ENCODE measurements at regions of chr17 and their contacts with region 1.

Region 1: DNA sequence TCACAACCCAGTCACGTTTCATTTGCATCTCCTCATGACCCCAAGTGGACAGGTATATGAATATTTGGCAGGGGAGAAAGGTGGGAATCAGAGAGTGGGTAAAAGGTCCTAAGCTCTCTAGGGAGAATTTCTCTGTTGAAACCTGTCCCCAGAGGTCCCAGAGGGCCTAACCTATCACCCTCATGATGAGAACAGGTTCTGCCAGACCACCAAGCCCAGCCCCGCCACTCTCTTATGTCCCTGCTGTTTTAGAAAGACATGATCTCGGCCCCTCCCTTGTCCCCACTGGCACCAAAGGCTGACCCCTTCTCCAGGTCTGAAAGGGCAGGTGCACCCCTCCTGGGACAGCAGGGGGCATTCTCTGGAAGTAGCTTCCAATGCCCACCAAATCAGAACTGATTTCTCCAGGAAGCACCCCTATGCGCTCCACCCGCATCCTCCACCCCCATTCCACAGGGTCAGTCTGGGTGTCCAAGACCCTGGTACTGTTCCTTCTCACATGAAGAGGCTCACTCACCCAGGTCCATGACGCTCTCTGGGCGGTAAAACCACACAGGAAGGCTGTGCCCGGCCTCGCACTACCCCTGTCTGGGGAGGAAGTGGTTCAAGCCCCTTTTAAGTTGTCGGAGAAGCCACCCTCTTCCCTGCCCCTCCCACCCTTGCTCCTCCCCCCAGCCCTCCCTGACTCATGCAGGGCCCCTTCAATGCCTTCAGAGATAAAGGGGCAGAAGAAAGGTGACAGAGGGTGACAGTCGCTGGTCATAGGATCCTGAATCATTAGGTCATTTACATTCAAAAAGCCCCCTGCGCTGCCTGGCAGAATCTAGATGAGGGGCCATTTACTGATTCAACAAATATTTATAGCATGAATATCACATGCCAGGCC is at the start of gene CCR7:
- DNase-seq: peak; percentile 78
- ATAC-seq: peak; percentile 66
- H3K4me3 Mint-ChIP-seq: peak within 1 kb of the TSS; percentile 89
- H3K27ac Mint-ChIP-seq: peak within 1 kb of the TSS; percentile 99
- H3K4me1 Mint-ChIP-seq: peaks cover 74% of the 10 kb centered on the region
- H3K27me3 Mint-ChIP-seq: no peaks in the 10 kb centered on the region
- CTCF ChIP-seq: no peak
- total RNA-seq, gene CCR7: 572 and 573 TPM in 2 replicates

Region 2: DNA sequence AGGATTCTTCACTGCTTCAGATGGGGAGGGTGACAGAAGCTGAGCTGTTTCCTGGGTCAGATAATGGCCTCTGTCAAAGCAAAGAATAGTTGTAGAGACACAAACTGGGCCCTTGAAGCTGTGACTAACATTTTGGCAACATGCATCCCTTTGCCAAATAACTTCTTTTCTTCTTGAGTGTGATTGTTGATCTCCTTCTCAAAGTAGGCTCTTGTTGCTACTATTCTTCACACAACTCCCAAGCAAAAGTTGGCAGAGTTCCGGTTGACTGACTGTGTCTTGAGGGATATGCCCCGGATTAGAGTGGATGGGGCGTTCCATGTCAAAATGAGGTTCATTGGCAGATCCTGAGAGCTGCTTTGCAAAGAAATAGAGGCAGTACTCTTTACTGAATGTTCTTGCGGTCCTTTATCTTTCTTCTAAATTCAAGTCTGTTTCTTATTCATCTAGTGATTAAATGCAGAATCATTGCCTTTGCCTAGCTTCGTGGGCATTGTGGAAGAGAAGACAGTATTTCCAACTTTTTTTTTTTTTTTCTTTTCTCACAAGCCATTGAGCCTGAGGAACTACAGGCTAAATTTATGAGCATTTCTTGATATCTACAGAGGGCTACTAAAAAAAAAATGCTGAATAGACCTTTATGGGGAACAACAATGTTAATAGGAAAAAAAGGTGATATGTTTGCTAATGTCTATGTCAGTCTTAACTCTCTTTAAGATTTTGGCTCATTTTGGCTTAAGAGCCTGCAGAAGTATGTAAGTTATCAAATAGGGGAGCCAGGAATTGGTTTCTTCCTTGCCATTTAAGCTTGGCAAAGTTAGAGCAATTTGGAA is 340.2 kb before region 1 on chr17:
- CTCF ChIA-PET with region 1: no interaction called
- POLR2A ChIA-PET with region 1: no interaction called
- intact Hi-C with region 1: no loop called
- DNase-seq: no peak
- ATAC-seq: no peak
- H3K4me3 Mint-ChIP-seq: no peak overlapping the region
- H3K27ac Mint-ChIP-seq: peak overlapping the region; percentile 62
- H3K4me1 Mint-ChIP-seq: peaks cover 30% of the 10 kb centered on the region
- H3K27me3 Mint-ChIP-seq: no peaks in the 10 kb centered on the region
- CTCF ChIP-seq: no peak

Region 3: DNA sequence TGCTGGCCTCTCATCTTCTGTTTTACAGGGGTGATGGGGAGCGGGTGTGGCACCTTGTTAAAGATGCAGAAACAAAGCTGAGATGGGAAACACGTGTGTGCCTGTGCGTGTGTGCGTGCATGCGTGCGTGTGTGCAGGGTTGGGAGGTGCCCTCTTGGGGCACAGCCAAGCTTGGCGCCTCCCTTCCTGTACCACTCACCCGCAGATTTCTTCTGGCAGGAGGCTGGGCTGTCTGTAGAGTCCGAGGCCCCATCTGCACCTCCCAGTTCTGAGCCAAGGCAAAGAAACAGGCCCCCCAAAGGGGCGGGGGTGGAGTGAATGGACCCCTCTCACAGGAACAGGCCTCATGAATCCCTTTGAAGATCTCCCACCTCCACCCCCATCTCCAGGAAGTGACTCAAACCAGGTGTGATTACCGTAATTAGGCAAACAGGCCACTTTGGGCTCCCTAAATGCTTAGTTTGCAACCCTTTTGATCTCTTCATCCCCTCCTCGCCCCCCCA is 84.6 kb before region 1 on chr17:
- CTCF ChIA-PET with region 1: interaction called, 6 read pairs
- POLR2A ChIA-PET with region 1: interaction called, 13 read pairs
- intact Hi-C with region 1: no loop called
- DNase-seq: peak; percentile 32
- ATAC-seq: peak; percentile 88
- H3K4me3 Mint-ChIP-seq: peak overlapping the region; percentile 41
- H3K27ac Mint-ChIP-seq: peak overlapping the region; percentile 72
- H3K4me1 Mint-ChIP-seq: peaks cover 57% of the 10 kb centered on the region
- H3K27me3 Mint-ChIP-seq: no peaks in the 10 kb centered on the region
- CTCF ChIP-seq: no peak

Region 4: DNA sequence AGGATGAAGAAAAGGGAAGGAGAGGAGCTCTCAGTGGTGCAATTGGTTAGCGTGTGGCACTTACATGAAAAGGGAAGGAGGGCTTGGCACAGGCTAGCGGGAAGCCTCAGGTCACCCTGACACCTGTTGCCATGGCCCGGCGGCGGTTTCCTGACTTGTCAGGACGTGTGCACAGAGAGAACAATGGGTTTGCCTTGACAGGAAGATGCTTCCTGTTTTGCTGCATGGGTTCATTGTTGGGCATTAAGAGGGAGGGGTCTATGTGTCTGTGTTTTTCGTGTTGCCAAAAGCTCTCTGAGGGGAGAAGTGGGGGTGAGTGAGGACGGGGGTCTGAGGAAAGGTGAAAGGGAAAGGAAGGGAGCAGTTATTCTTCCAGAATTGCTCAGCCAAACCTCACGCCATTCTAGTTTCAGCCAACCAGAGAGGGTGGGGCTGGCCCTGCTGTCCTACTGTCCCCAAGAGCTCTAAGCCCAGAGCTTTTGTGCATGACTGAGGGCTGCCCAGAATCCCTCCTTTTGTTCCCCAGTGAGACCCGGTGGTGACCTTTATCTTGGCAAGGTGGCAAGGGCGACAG is 17.3 kb after region 1 on chr17:
- CTCF ChIA-PET with region 1: interaction called, 25 read pairs
- POLR2A ChIA-PET with region 1: interaction called, 1,450 read pairs
- intact Hi-C with region 1: loop called (anchors 1 kb)
- DNase-seq: no peak
- ATAC-seq: peak; percentile 55
- H3K4me3 Mint-ChIP-seq: peak overlapping the region; percentile 54
- H3K27ac Mint-ChIP-seq: peak overlapping the region; percentile 87
- H3K4me1 Mint-ChIP-seq: peaks cover 93% of the 10 kb centered on the region
- H3K27me3 Mint-ChIP-seq: no peaks in the 10 kb centered on the region
- CTCF ChIP-seq: no peak

Region 5: GRCh38 chr17:40588552-40588951 is 23.4 kb after region 1 on chr17:
- CTCF ChIA-PET with region 1: interaction called, 6 read pairs
- POLR2A ChIA-PET with region 1: interaction called, 65 read pairs
- intact Hi-C with region 1: no loop called
- DNase-seq: no peak
- ATAC-seq: no peak
- H3K4me3 Mint-ChIP-seq: no peak overlapping the region
- H3K27ac Mint-ChIP-seq: no peak overlapping the region
- H3K4me1 Mint-ChIP-seq: peaks cover 72% of the 10 kb centered on the region
- H3K27me3 Mint-ChIP-seq: no peaks in the 10 kb centered on the region
- CTCF ChIP-seq: no peak

Region 6: GRCh38 chr17:41140360-41141132 is 575.4 kb after region 1 on chr17 and contains the start of gene KRTAP4-6:
- CTCF ChIA-PET with region 1: no interaction called
- POLR2A ChIA-PET with region 1: no interaction called
- intact Hi-C with region 1: no loop called
- DNase-seq: no peak
- ATAC-seq: no peak
- H3K4me3 Mint-ChIP-seq: no peak within 1 kb of the TSS
- H3K27ac Mint-ChIP-seq: no peak within 1 kb of the TSS
- H3K4me1 Mint-ChIP-seq: no peaks in the 10 kb centered on the region
- H3K27me3 Mint-ChIP-seq: peaks cover 12% of the 10 kb centered on the region
- CTCF ChIP-seq: no peak
- total RNA-seq, gene KRTAP4-6: not detected in 2 replicates